ENCODE measurements at regions of chr3 and their contacts with region 1.

Region 1: DNA sequence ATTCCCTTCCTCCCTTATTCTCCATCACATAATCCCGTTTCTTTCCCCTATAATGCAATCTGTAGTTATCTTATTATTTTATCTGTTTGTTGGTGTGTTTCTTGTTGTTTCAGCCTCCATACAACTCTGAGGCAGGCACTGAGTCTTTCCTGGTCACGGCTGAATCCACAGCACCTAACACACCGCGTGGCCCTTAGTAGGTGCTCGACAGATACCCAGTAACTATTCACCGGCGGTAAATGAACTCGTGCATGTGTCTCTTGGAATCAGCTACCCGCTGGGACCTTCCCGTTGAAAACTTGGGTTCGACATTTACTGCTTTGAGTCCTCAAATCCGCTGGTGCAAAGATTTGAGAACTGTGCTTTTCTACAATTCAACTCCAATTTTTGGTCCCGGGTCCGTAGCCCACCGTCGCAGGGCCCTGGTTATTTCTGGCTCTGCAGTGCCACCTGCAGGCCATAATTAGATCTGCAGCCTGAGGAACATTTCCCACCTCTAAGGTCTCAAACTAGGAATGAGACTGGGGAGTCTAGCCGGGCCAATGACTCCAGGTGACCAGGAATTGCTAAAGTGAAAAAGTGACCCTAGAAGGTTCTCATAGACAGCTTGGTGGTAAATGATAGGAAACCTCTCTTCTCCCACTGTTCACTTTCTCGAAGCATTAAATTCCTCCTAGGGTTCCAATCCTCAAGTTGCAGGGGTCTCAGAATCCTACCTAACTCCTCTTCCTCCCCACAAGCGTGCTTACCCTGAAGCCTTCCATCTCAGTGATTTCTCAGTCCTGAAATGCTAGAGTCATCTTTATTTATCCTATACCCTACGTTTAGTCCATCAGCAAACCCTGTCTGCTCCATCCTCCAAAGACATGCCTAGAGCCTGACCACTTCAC is 40.0 kb upstream of the TRH start:
- DNase-seq: peak; percentile 59
- CTCF ChIP-seq: peak; percentile 93

Region 2: GRCh38 chr3:129343643-129344332 is 590.7 kb before region 1 on chr3:
- CTCF ChIA-PET with region 1: no interaction called
- POLR2A ChIA-PET with region 1: no interaction called
- DNase-seq: peak; percentile 59
- CTCF ChIP-seq: peak; percentile 64

Region 3: GRCh38 chr3:129627429-129628168 is 306.9 kb before region 1 on chr3:
- CTCF ChIA-PET with region 1: interaction called, 12 read pairs
- POLR2A ChIA-PET with region 1: no interaction called
- DNase-seq: peak; percentile 85
- CTCF ChIP-seq: peak; percentile 90

Region 4: GRCh38 chr3:129650256-129650872 is 284.1 kb before region 1 on chr3:
- CTCF ChIA-PET with region 1: interaction called, 13 read pairs
- POLR2A ChIA-PET with region 1: no interaction called
- DNase-seq: peak; percentile 60
- CTCF ChIP-seq: peak; percentile 66

Region 5: DNA sequence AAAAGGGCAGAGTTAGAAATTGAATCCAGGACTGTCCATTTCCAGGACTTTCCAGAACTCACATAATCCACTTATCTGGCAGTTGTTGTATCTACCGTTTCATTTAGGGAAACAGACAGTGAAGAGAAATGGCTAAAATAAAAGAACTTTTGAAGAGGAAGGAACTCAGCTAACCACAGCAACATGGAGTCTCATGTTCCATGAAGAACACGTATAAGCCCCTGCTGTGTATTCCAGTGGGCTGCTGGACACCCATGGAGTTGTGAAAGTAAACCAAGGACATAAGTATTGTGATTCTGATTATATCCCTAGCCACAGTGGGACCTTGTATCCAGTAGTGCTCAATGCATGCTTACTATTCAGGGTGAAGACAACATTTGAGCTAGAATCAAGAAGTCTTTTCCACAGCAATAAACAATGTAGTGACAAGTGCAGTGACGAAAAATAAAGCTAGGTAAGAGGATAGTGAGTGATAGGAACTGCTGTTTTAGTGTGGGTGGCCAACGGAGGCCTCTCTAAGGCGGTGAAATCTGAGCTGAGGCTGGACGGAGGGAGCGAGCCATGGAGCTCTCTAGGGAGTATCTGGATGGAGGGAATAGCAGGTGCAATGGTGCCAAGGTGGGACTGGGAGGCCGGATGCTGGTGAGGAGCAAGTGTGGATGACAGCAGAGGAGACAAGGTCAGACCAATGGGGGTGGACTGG is 13.2 kb after region 1 on chr3:
- CTCF ChIA-PET with region 1: interaction called, 22 read pairs
- POLR2A ChIA-PET with region 1: no interaction called
- DNase-seq: no peak
- CTCF ChIP-seq: no peak

Measured in GM10248 (cell line).